HAP-1 (cell line): ENCODE measurements at regions of chr11 and their contacts with region 1.

Region 1: GRCh38 chr11:34890812-34891211 is 25.4 kb downstream of the APIP start:
- DNase-seq: peak in 1 of 2 experiments; percentile 55
- H3K4me3 ChIP-seq: no peak overlapping the region
- H3K4me1 ChIP-seq: peaks cover 13% of the 10 kb centered on the region; the same call in 1 of the 2 replicates
- H3K27me3 ChIP-seq: no peaks in the 10 kb centered on the region

Region 2: GRCh38 chr11:34149786-34150185 is 741.0 kb before region 1 on chr11:
- in situ Hi-C with region 1: loop called (anchors 10 kb)
- DNase-seq: peak in 1 of 2 experiments; percentile 29
- H3K4me3 ChIP-seq: no peak overlapping the region
- H3K4me1 ChIP-seq: no peaks in the 10 kb centered on the region
- H3K27me3 ChIP-seq: no peaks in the 10 kb centered on the region

Region 3: DNA sequence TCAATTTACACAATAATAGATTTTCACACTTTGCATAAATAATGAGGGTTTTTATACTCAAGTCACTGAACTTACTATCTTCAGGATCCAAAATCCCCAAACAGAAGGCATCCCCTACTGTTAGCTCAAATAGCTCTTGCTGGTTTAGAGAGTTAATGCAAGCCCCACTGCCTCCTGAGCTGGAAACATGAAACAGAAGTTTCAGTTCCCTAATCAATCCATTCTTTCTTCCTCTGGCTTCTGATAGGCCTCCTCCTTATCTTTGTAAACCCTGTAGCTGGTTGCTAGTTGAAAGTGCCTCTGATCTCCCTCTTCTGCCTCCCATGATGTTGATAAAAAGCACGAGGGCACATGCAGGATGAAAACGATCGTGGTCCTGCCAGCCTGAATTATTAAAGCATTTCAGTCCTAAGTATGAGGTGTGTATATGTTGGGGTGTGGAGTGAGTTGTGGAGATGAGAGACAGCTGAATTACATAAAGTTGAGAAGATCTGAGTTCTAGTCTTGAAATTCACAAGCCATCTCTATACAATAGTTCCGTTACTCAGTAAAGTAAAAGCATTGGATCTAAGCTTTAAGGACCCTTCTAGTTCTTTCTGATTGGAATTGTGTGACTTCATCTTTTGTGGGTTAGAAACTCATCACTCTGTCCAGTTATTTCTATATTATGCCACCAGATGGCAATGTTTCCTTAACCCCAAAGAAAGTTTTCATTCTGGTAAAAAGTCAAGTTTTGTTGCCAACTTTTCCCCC is 304.9 kb before region 1 on chr11:
- in situ Hi-C with region 1: loop called (anchors 5 kb)
- DNase-seq: peak in 1 of 2 experiments; percentile 79
- H3K4me3 ChIP-seq: no peak overlapping the region
- H3K4me1 ChIP-seq: peaks cover 5% of the 10 kb centered on the region; the same call in 1 of the 2 replicates
- H3K27me3 ChIP-seq: no peaks in the 10 kb centered on the region

Region 4: DNA sequence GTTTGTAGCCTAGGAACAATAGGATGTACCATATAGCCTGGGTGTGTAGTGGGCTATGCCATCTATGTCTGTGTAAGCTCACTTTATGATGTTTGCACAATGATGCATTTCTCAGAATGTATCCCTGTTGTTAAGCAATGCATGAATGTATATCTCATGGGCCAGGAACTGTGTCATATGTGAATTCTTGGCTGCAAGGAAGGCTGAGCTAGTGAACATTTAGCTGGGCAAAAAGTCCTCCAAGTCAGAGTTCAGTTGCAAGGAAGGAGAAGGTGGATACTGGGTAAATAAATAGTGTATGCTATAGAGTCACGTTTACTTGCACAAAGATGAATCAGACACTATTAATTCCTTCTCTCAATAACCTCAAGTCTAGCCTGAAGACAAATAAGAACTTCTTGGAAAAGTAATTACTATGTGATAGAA is 133.8 kb before region 1 on chr11:
- in situ Hi-C with region 1: no loop called
- DNase-seq: no peak
- H3K4me3 ChIP-seq: no peak overlapping the region
- H3K4me1 ChIP-seq: no peaks in the 10 kb centered on the region
- H3K27me3 ChIP-seq: 0 out of 2 replicates have a peak, but pooled peaks cover 3% of the 10 kb centered on the region